PC-9 (cell line): ENCODE measurements at regions of chr17 and their contacts with region 1.

Region 1: DNA sequence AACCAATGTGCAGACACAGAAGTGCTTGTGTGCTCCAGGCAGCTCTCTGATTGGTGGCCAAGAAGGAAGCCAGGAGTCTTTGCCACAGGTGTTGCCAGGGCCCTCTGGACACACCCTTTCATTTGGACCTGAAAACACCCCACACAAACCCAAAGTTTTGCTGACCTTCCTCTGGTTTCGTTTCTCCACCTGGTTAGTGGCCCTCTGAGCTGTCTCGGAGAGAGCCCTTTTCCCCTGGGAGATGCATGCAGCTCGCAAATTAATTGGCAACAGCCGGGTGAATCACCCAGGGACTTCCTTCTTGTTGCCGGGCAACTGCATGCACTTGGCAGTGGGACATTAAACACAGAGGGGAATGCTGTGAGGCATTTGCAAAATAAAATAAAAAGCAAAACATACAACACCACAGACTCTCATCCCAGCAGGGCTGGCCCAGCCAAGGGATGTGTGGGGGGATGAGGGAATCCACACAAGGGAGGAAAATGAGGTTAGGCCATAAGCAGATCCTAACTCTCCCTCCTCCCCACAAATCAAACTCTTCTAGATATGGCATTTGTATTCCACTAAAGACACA is 286.6 kb downstream of the SOX9 start:
- DNase-seq: peak; percentile 90 to 98
- H3K4me3 ChIP-seq: peak overlapping the region; percentile 43; the same call in 1 of the 2 replicates
- H3K27ac ChIP-seq: peak overlapping the region; percentile 99
- H3K4me1 ChIP-seq: peaks cover 71% of the 10 kb centered on the region
- H3K27me3 ChIP-seq: no peaks in the 10 kb centered on the region
- CTCF ChIP-seq: no peak

Region 2: DNA sequence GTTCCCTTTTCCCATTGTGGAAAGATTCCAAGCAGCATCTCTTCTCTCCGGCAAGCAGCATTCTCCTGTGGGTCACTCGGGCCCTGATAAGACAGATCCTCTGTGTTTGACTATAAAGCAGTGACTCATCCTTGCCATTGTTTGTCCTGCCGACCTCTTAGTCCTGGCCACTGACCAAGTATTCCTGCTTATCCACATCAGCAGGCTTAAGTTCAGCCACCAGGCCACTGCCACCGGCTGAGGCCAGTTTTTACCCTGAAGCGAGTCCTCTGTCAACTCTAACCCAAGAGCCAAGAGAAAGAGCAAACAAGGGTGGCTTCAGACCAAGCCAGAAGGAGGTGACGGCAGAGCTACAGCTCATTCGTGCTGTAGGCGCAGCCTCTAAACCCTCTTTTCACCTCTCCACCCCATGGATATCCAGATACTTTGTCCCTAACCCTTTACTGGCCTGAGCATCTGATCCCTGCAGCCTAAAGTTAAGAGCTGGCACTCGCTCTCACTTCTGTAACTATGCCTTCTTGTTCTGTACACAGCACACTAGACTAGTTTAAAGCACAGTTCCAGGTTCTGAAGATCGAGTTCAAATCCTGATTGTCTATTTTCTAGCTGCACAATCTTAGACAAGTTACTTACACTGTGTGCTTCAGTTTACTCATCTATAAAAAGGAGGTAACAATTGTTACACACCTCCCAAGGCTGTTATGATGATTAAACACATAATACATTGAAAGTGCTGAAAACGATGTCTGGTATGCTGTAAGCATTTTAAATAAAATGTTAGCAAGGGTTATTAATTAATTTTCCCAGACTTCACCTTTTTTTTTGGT is 255.6 kb before region 1 on chr17:
- CTCF ChIA-PET with region 1: no interaction called
- POLR2A ChIA-PET with region 1: interaction called, 7 read pairs
- intact Hi-C with region 1: loop called (anchors 1 kb)
- DNase-seq: peak; percentile 86 to 99
- H3K4me3 ChIP-seq: peak overlapping the region; percentile 38; the same call in 1 of the 2 replicates
- H3K27ac ChIP-seq: peak overlapping the region; percentile 92
- H3K4me1 ChIP-seq: peaks cover 36% of the 10 kb centered on the region
- H3K27me3 ChIP-seq: no peaks in the 10 kb centered on the region
- CTCF ChIP-seq: no peak

Region 3: DNA sequence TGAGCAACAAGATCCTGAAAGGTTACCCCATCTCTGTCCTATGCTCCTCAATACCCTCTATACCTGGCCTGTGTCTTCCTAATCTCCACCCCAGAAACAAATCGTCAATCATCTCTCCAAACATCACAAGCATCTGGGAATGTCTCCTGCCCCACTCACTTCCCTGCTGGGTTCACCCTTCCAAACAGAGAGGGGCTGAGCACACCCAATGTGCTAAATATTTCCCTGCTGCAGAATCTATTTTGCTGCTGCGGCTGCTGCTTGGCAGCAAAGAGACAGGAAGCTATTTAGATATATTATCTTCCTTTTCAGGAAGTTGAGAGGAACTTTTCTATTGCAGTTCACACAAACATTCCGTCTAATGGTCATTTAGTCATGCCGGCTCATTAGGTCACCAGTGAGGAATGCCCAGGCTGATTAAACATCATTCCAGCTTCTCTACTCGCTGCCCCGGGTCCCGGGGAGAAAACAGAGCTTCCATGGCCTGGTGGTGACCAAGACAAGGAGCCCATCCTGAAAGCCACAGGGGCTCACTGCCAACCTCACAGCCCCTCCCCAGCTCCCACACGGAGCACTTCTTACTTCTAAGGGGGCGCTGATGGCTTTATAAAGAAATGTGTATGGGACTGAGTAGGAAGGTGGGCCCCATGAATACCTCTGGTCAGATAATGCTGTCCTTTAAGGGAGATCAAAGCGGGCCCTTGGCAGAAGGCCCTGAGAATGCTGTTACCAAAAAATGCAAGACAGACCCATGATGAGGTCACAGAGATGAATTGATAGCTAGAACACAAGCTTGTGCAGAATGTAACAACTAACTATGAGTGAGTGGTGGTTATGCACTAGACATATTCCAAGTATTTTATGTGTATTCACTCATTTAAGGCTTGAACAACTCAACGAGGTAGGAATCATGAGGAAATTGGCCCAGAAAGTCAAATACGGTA is 68.3 kb before region 1 on chr17:
- CTCF ChIA-PET with region 1: interaction called, 3 read pairs
- POLR2A ChIA-PET with region 1: interaction called, 11 read pairs
- intact Hi-C with region 1: loop called (anchors 1 kb)
- DNase-seq: peak; percentile 81 to 97
- H3K4me3 ChIP-seq: no peak overlapping the region; the same call in 1 of the 2 replicates
- H3K27ac ChIP-seq: peak overlapping the region; percentile 88
- H3K4me1 ChIP-seq: peaks cover 34% of the 10 kb centered on the region
- H3K27me3 ChIP-seq: no peaks in the 10 kb centered on the region
- CTCF ChIP-seq: no peak

Region 4: GRCh38 chr17:72388765-72389473 is 18.5 kb before region 1 on chr17:
- CTCF ChIA-PET with region 1: interaction called, 7 read pairs
- POLR2A ChIA-PET with region 1: interaction called, 11 read pairs
- intact Hi-C with region 1: loop called (anchors 1 kb)
- DNase-seq: peak; percentile 86 to 89
- H3K4me3 ChIP-seq: no peak overlapping the region
- H3K27ac ChIP-seq: peak overlapping the region; percentile 87
- H3K4me1 ChIP-seq: peaks cover 86% of the 10 kb centered on the region
- H3K27me3 ChIP-seq: no peaks in the 10 kb centered on the region
- CTCF ChIP-seq: peak; percentile 63

Region 5: GRCh38 chr17:72465191-72466024 is 58.0 kb after region 1 on chr17:
- CTCF ChIA-PET with region 1: no interaction called
- POLR2A ChIA-PET with region 1: interaction called, 8 read pairs
- intact Hi-C with region 1: loop called (anchors 1 kb)
- DNase-seq: peak; percentile 92 to 97
- H3K4me3 ChIP-seq: peak overlapping the region; percentile 53
- H3K27ac ChIP-seq: peak overlapping the region; percentile 100
- H3K4me1 ChIP-seq: peaks cover 79% of the 10 kb centered on the region
- H3K27me3 ChIP-seq: no peaks in the 10 kb centered on the region
- CTCF ChIP-seq: no peak